HCT116 (cell line): ENCODE measurements at regions of chr6 and their contacts with region 1.

Region 1: DNA sequence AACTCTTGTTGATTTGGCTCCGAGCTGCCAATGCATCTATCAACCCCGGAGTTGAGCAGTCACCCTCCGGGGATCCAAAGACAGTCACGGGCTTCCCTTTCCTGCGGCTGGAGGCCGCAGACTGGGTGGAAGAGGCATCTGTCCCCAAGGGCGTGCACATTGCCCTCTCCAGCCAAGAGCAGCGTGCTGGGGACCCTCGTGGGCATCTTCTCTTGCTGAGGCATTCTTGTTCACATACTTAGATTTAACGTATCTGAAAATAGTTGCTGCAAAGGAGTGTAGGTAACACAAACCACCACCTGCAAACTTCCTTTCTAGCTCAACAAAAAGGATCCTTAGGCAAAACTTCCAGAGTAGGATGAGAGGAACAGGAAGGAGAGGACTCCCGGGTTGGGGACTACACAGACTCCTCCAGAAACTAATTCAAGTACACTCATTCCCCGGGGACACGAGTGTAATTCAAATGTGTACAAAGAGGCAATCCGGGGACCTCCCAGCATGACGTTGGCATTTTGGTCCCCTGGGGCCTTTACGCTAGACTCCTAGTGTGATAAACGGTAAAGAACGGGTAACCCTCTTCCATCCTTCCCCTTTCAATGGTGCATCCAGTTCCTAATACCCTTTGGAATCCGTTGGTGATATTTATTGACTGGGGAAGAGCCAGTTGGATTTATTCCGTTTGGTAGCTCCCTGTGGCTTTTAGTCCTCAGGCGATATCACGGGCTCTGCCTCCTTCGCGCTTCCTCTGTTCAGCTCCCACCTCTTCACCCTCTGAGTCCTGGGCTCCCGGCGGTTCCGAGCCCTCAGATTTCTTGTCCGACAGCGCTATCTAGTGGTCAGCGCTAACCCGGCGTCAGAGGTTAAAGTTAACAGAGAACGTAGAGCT is 2.7 kb upstream of the COL12A1 start:
- DNase-seq: peak; percentile 66
- ATAC-seq: peak; percentile 60
- H3K4me3 ChIP-seq: no peak overlapping the region
- H3K27ac ChIP-seq: no peak overlapping the region
- H3K4me1 ChIP-seq: peaks cover 8 to 23% of the 10 kb centered on the region in 2 experiments
- H3K27me3 ChIP-seq: no peaks in the 10 kb centered on the region
- CTCF ChIP-seq: peak; percentile 80 to 97 (median 87); a peak in 5 of 6 replicates
- POLR2A ChIP-seq: no peak
- RAD21 ChIP-seq: peak; percentile 95

Region 2: DNA sequence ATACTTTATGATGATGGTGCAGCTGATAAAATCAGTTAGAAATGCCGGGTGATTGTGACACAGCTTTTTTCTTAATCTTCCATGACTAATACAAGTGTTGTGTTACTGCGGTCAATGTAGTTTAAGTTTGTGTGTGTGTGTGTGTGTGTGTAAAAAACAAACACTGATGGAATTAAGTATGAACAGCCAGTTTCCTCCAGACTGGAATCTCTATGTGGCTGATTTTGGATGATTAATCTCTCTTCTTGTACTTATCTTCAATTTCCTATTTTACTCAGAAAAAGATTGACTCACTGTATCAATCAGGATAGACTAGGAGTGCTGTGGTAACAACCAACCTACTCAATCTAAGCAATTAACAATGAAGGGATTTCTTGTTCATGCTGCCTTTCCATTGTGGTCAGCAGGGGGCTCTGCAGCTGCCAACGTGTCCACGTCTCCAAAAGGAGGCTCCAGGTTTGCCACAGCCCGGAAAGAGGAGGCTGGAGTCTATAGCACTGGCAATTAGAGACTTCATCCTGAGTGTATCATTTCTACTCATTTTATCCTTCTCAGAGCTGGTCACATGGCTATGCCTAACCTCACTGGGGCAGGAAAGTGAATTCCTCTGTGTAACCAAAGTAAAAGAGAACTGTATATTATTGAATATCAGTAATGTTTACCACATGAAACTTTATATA is 1404.8 kb before region 1 on chr6:
- CTCF ChIA-PET with region 1: no interaction called
- POLR2A ChIA-PET with region 1: no interaction called
- RAD21 ChIA-PET with region 1: no interaction called
- intact Hi-C with region 1: loop called (anchors 5 kb)
- DNase-seq: peak; percentile 32
- ATAC-seq: peak; percentile 89
- H3K4me3 ChIP-seq: no peak overlapping the region
- H3K27ac ChIP-seq: no peak overlapping the region
- H3K4me1 ChIP-seq: no peaks in the 10 kb centered on the region
- H3K27me3 ChIP-seq: no peaks in the 10 kb centered on the region
- CTCF ChIP-seq: peak; percentile 29 to 85 (median 78); a peak in 5 of 6 replicates
- POLR2A ChIP-seq: no peak
- RAD21 ChIP-seq: peak; percentile 41

Region 3: GRCh38 chr6:74091136-74091793 is 1117.3 kb before region 1 on chr6:
- CTCF ChIA-PET with region 1: interaction called, 33 read pairs
- POLR2A ChIA-PET with region 1: no interaction called
- RAD21 ChIA-PET with region 1: interaction called in 1 of 2 experiments, 3 read pairs
- intact Hi-C with region 1: loop called (anchors 2 kb)
- DNase-seq: peak; percentile 65
- ATAC-seq: peak; percentile 95
- H3K4me3 ChIP-seq: no peak overlapping the region
- H3K27ac ChIP-seq: no peak overlapping the region
- H3K4me1 ChIP-seq: no peaks in the 10 kb centered on the region
- H3K27me3 ChIP-seq: no peaks in the 10 kb centered on the region
- CTCF ChIP-seq: peak; percentile 58 to 85 (median 58); a peak in 5 of 6 replicates
- POLR2A ChIP-seq: no peak
- RAD21 ChIP-seq: peak; percentile 61

Region 4: GRCh38 chr6:74574794-74575193 is 633.7 kb before region 1 on chr6:
- CTCF ChIA-PET with region 1: interaction called, 7 read pairs
- POLR2A ChIA-PET with region 1: no interaction called
- RAD21 ChIA-PET with region 1: no interaction called
- intact Hi-C with region 1: loop called (anchors 10 kb)
- DNase-seq: peak; percentile 24
- ATAC-seq: peak; percentile 90
- H3K4me3 ChIP-seq: no peak overlapping the region
- H3K27ac ChIP-seq: no peak overlapping the region
- H3K4me1 ChIP-seq: no peaks in the 10 kb centered on the region
- H3K27me3 ChIP-seq: no peaks in the 10 kb centered on the region
- CTCF ChIP-seq: peak; percentile 35 to 67 (median 64); a peak in 5 of 6 replicates
- POLR2A ChIP-seq: no peak
- RAD21 ChIP-seq: peak; percentile 56

Region 5: DNA sequence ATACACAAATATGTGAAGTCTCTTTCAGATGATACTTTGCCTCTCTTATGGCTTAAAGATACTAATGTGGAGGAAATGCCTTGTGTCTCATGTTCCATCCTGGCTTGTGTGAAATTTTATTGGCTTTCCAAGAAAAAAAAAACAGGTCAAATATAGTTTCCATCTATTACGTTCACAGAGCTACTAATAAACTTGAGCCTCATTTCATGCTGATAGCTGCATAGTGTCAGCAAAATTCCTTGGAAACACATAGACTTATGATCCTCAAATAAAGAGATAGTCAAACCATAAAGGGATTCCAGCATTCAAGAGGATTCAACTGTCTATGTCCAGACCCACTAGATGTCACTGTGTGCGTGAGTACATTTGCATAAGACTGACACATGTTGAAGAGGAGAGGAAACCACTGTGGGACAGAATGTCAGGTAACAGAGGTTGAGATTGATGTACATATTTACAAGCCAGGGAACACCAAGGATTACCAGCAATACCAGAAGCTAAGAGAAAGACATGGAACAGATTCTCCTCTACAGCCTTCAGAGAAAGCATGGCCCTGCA is 269.3 kb before region 1 on chr6:
- CTCF ChIA-PET with region 1: interaction called, 6 read pairs
- POLR2A ChIA-PET with region 1: no interaction called
- RAD21 ChIA-PET with region 1: interaction called in 1 of 2 experiments, 3 read pairs
- intact Hi-C with region 1: loop called (anchors 2 kb)
- DNase-seq: peak; percentile 49
- ATAC-seq: peak; percentile 89
- H3K4me3 ChIP-seq: no peak overlapping the region
- H3K27ac ChIP-seq: no peak overlapping the region
- H3K4me1 ChIP-seq: peaks cover 0 to 23% of the 10 kb centered on the region in 2 experiments; a peak in 1 of 4 replicates
- H3K27me3 ChIP-seq: no peaks in the 10 kb centered on the region
- CTCF ChIP-seq: peak; percentile 31 to 40 (median 33); a peak in 4 of 6 replicates
- POLR2A ChIP-seq: no peak
- RAD21 ChIP-seq: peak; percentile 71

Region 6: DNA sequence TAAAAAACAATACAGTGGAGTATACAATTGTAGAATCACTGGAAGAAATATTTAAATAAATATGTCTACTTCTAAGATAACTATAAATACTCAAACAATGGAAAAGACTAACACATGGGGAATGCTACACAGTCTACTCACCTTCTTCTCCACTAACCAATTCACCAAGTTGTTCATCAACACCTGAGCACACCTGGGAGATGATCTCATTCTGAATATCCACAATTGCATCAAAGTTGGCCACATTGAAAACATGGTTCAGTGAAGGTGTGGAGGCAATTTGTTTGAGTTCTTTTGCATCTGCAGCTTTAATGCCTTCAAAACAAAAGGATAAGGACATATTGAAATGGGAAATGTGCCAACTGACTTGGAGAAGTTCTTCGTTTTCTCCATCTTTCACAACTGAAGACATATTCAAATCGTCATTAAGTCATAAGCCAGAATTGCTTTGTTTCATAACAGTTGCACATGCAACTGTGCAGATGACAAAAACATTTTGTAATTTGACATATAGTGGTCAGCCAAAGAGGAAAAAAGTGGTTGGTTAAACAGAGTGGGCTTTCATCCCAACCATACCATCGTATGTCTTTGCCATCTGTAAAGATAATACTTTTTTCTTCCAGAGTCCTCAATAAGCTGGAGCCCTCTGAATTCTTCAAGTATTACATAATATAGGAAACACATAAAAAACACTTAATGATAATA is 20.2 kb before region 1 on chr6:
- CTCF ChIA-PET with region 1: no interaction called
- POLR2A ChIA-PET with region 1: no interaction called
- RAD21 ChIA-PET with region 1: no interaction called
- intact Hi-C with region 1: no loop called
- DNase-seq: no peak
- ATAC-seq: no peak
- H3K4me3 ChIP-seq: no peak overlapping the region
- H3K27ac ChIP-seq: no peak overlapping the region
- H3K4me1 ChIP-seq: no peaks in the 10 kb centered on the region; a peak in 1 of 4 replicates
- H3K27me3 ChIP-seq: no peaks in the 10 kb centered on the region
- CTCF ChIP-seq: no peak
- POLR2A ChIP-seq: no peak
- RAD21 ChIP-seq: no peak

Region 7: GRCh38 chr6:75516757-75517156 is 308.2 kb after region 1 on chr6:
- CTCF ChIA-PET with region 1: no interaction called
- POLR2A ChIA-PET with region 1: no interaction called
- RAD21 ChIA-PET with region 1: no interaction called
- intact Hi-C with region 1: no loop called
- DNase-seq: no peak
- ATAC-seq: 0 out of 2 replicates have a peak, but pooled peaks have one; percentile 34
- H3K4me3 ChIP-seq: no peak overlapping the region
- H3K27ac ChIP-seq: no peak overlapping the region
- H3K4me1 ChIP-seq: no peaks in the 10 kb centered on the region
- H3K27me3 ChIP-seq: no peaks in the 10 kb centered on the region
- CTCF ChIP-seq: no peak
- POLR2A ChIP-seq: no peak
- RAD21 ChIP-seq: no peak